ENCODE measurements at regions of chr9 and their contacts with region 1.

Region 1: DNA sequence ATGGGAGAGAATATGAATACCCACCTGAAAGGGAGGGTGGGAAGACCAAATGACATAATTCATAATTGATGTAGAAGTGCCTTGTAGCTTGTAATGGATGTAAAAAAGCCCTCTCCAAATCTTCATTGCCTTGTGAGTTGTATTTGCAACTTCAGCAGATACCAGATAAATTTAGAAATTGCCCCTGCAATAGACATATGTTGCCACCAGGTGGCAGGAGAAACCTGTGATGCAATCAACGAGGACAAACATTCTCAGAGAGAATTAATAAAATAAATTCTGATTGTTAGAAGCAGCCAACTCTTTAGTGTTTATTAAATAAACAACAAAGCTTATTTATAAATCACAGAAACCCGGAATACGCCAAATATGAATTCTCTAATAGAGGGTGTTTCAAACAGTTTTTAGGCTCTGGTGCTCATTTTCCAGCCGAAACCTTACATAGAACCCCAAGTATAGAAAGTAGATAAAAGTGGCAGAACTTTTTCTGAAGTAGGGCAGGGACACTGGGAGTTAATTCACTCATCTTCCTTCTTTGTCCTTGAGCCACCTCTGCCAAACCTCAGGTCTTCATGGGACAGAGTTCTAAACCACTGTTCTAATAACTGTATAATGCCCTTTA is 147.8 kb downstream of the TMEM38B start:
- DNase-seq: peak; percentile 61
- H3K4me3 Mint-ChIP-seq: no peak overlapping the region
- H3K27ac Mint-ChIP-seq: no peak overlapping the region
- H3K4me1 Mint-ChIP-seq: no peaks in the 10 kb centered on the region
- H3K27me3 Mint-ChIP-seq: no peaks in the 10 kb centered on the region

Region 2: GRCh38 chr9:105608721-105609598 is 233.2 kb before region 1 on chr9:
- CTCF ChIA-PET with region 1: interaction called, 3 read pairs
- intact Hi-C with region 1: loop called (anchors 5 kb)
- DNase-seq: no peak
- H3K4me3 Mint-ChIP-seq: no peak overlapping the region
- H3K27ac Mint-ChIP-seq: no peak overlapping the region
- H3K4me1 Mint-ChIP-seq: no peaks in the 10 kb centered on the region
- H3K27me3 Mint-ChIP-seq: no peaks in the 10 kb centered on the region

Region 3: GRCh38 chr9:105637787-105638395 is 204.2 kb before region 1 on chr9:
- CTCF ChIA-PET with region 1: no interaction called
- intact Hi-C with region 1: no loop called
- DNase-seq: no peak
- H3K4me3 Mint-ChIP-seq: no peak overlapping the region
- H3K27ac Mint-ChIP-seq: no peak overlapping the region
- H3K4me1 Mint-ChIP-seq: no peaks in the 10 kb centered on the region
- H3K27me3 Mint-ChIP-seq: no peaks in the 10 kb centered on the region

Region 4: DNA sequence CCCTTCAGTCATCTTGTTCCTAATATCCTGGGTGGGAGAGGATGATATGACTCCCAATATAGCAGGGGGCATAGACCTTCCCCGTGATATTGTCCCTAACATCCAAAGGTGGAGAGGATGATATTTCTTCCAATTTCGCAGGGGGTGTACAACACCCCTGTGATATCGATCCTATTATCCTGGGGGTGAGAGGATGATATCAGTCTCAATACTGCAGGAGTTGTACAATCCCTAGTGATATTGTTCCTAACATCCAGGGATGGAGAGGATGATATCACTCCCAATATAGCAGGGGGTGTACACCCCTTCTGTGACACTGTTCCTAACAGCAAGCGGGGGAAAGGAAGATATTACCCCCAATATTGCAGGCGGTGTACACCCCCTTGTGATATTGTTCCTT is 25.2 kb before region 1 on chr9:
- CTCF ChIA-PET with region 1: no interaction called
- intact Hi-C with region 1: no loop called
- DNase-seq: no peak
- H3K4me3 Mint-ChIP-seq: no peak overlapping the region
- H3K27ac Mint-ChIP-seq: no peak overlapping the region
- H3K4me1 Mint-ChIP-seq: no peaks in the 10 kb centered on the region
- H3K27me3 Mint-ChIP-seq: no peaks in the 10 kb centered on the region

Region 5: DNA sequence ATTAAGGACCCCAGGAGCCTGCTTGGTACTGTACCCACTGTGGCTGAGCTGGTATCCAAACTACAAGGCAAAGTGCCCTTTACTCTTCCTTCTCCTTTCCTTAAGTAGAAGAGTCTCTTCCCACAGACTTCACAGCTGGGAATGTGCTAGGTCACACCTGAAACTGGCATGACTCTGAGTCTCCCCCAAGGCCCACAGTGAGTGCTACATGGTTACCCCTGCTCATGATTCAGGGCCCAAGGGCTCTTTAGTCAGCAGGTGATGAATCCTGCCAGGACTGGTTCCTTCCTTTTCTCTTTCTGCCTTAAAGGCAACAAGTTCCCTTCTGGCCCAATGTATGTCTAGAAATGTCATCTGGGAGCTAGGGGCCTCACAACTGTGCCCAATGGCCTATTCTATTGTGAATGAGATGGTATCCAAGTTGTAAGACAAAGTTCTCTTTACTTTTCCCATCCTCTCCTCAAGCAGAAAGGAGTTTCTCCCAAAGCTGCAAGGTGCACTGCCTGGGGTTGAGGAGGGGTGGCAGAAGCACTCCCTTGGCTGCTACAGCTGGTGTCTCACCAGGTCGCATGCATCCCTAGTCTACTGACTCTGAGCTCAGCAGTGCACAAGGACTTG is 13.4 kb before region 1 on chr9:
- CTCF ChIA-PET with region 1: interaction called, 10 read pairs
- intact Hi-C with region 1: no loop called
- DNase-seq: no peak
- H3K4me3 Mint-ChIP-seq: no peak overlapping the region
- H3K27ac Mint-ChIP-seq: no peak overlapping the region
- H3K4me1 Mint-ChIP-seq: no peaks in the 10 kb centered on the region
- H3K27me3 Mint-ChIP-seq: no peaks in the 10 kb centered on the region

Region 6: DNA sequence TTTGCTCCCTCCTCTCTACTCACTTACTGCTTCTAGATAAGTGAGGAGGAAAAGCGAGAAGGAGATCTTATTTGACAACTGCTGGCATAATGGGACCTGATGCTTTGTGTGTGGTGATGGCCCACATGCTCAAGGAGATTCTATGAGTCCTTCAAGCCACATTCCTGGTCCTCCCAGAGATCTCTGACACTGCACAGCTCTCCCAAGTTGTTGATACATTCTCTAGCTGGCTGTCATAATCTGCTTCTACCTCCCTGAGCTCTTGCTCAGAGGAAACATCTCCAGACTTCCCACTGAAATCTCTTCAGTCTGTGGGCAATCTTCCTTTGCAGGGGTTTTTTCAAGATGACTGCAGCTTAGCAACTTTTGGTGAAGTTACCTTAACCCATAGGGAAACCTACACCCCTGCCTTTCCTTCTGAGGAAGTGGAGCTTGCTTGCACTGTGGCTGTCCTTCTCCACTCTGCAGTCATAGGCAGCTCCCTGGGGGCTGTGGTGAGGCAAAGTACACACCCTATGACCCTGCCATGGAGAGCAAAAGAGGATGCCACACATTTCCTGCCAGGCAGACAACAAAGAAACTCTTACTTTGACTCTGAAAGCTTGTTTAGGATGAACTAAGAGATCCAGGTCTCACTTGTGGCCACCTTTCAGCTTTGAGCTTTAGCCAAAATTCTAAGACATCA is 16.0 kb after region 1 on chr9:
- CTCF ChIA-PET with region 1: interaction called, 14 read pairs
- intact Hi-C with region 1: no loop called
- DNase-seq: peak; percentile 46
- H3K4me3 Mint-ChIP-seq: no peak overlapping the region
- H3K27ac Mint-ChIP-seq: peak overlapping the region; percentile 27
- H3K4me1 Mint-ChIP-seq: peaks cover 28% of the 10 kb centered on the region
- H3K27me3 Mint-ChIP-seq: no peaks in the 10 kb centered on the region

Region 7: GRCh38 chr9:105881654-105882349 is 39.7 kb after region 1 on chr9:
- CTCF ChIA-PET with region 1: interaction called, 149 read pairs
- intact Hi-C with region 1: loop called (anchors 1 kb)
- DNase-seq: peak; percentile 87
- H3K4me3 Mint-ChIP-seq: no peak overlapping the region
- H3K27ac Mint-ChIP-seq: no peak overlapping the region
- H3K4me1 Mint-ChIP-seq: peaks cover 7% of the 10 kb centered on the region
- H3K27me3 Mint-ChIP-seq: peaks cover 2% of the 10 kb centered on the region

Region 8: GRCh38 chr9:106066940-106067524 is 224.9 kb after region 1 on chr9:
- CTCF ChIA-PET with region 1: no interaction called
- intact Hi-C with region 1: no loop called
- DNase-seq: no peak
- H3K4me3 Mint-ChIP-seq: no peak overlapping the region
- H3K27ac Mint-ChIP-seq: no peak overlapping the region
- H3K4me1 Mint-ChIP-seq: no peaks in the 10 kb centered on the region
- H3K27me3 Mint-ChIP-seq: no peaks in the 10 kb centered on the region

Region 9: GRCh38 chr9:106862825-106863720 is 1020.9 kb after region 1 on chr9 and contains the start of gene ZNF462:
- CTCF ChIA-PET with region 1: no interaction called
- intact Hi-C with region 1: loop called (anchors 5 kb)
- DNase-seq: peak; percentile 13
- H3K4me3 Mint-ChIP-seq: peak within 1 kb of the TSS; percentile 76
- H3K27ac Mint-ChIP-seq: no peak within 1 kb of the TSS
- H3K4me1 Mint-ChIP-seq: peaks cover 32% of the 10 kb centered on the region
- H3K27me3 Mint-ChIP-seq: peaks cover 69% of the 10 kb centered on the region
- total RNA-seq, gene ZNF462: 0.33 to 0.40 TPM

Measured in activated naive CD4-positive, alpha-beta T cell treated with anti-CD3 and anti-CD28 coated beads for 36 hours (primary cell).